ENCODE measurements at regions of chr5 and their contacts with region 1.

Region 1: GRCh38 chr5:96595300-96596090 is 66.7 kb upstream of the CAST start:
- DNase-seq: no peak
- ATAC-seq: no peak
- H3K4me3 ChIP-seq: no peak overlapping the region
- H3K27ac ChIP-seq: no peak overlapping the region
- H3K4me1 ChIP-seq: no peaks in the 10 kb centered on the region
- H3K27me3 ChIP-seq: no peaks in the 10 kb centered on the region

Region 2: GRCh38 chr5:95858661-95859326 is 736.7 kb before region 1 on chr5:
- intact Hi-C with region 1: loop called in 1 of 4 experiments (anchors 10 kb)
- DNase-seq: peak; percentile 93 to 96 (median 93)
- ATAC-seq: peak; percentile 77 to 78
- H3K4me3 ChIP-seq: no peak overlapping the region
- H3K27ac ChIP-seq: peak overlapping the region; percentile 90
- H3K4me1 ChIP-seq: peaks cover 9% of the 10 kb centered on the region
- H3K27me3 ChIP-seq: no peaks in the 10 kb centered on the region

Region 3: DNA sequence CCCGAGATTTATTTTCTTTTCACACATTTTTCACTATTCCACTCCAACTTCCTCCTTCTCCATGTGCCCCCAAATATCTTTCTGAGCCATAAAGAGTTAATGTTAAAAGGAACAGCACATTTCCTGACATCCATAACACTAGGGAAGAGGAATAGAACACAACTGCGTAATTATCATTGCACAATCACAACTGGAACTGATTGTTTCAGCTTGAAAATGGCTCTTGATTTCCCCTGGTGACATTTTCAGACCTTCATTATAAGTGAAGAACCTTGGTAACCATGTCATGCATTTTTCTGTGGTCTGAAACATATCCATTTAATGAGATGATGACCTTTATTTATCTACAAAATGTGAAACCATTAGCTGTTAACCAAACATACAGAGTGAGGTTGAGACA is 244.8 kb before region 1 on chr5:
- intact Hi-C with region 1: loop called in 3 of 4 experiments (anchors 2 to 5 kb)
- DNase-seq: no peak
- ATAC-seq: peak in 1 of 2 donors; percentile 14
- H3K4me3 ChIP-seq: no peak overlapping the region
- H3K27ac ChIP-seq: no peak overlapping the region
- H3K4me1 ChIP-seq: no peaks in the 10 kb centered on the region
- H3K27me3 ChIP-seq: no peaks in the 10 kb centered on the region

Region 4: DNA sequence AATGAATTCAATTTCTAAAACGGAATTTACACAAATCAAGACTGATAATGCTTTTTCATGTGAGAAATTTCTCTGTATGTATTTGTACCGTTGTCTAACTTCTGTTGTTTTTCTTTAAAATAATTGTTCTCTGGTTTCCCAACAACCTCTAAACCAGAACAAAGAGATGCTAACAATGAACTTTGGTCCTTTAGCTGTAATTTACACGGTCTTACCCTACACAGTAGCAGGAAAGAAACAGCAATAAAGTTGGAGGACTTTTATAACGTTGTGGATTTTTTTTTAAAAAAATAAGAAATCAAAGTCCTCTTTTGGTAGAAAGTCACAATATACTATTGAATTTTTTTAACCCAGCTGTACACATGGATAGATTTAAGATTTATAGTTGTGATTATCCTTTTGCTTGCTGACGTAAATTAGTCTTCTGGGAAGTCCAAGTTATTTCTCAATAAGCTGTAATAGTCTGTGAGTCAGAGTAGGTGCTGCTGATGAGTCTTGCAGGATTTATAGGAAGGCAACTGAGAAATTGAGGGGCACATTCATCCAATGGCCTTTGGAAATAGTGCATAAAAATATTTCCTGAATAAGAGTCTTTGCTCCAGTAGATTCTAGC is 85.7 kb before region 1 on chr5:
- intact Hi-C with region 1: no loop called
- DNase-seq: no peak
- ATAC-seq: no peak
- H3K4me3 ChIP-seq: no peak overlapping the region
- H3K27ac ChIP-seq: no peak overlapping the region
- H3K4me1 ChIP-seq: no peaks in the 10 kb centered on the region
- H3K27me3 ChIP-seq: no peaks in the 10 kb centered on the region

Measured in right cardiac atrium (tissue), 5 donors.